OCI-LY7 (cell line): ENCODE measurements at regions of chr11 and their contacts with region 1.

Region 1: DNA sequence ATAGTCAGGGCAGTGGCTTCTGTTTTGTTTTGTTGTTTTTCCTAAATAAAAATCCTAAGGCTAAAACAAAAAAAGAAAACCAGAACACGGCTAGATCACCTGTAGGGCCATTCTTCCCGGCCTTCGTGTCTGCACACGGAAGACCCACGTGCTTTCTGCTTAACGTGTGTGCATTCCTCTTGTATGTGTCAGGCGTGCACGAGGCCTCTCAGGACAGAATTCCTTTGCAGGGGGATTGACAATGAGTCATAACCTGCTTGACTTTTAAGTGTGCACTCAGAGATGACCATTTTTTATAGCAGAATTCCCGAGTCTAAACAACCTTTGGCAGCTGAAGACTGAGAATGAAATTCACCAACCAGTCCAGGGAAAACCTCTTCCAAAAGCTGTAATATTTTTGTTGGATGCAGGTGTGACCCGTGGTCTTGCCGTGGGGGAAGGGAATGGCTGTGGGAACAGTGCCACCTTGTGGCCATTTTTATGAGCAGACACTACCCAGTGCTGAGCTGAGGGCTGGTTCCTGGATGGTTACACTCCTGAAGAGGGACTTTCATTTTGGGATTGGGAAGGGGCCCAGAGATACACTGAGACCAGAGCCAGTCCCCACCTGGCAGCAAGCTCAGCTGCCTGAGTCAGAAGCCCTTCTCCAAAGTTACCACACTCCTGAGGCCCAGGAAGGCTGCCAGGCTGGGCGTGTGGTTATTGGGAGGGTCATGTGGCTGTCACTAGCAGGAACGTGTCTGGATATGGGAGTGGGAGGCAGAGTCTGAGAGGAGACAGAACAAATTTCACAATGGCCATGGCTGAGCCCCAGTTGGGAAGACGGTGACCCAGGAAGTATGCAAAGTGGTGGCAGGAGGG is 35.8 kb upstream of the DKK3 start:
- DNase-seq: peak; percentile 64
- H3K4me3 ChIP-seq: no peak overlapping the region
- H3K27ac ChIP-seq: no peak overlapping the region
- H3K4me1 ChIP-seq: no peaks in the 10 kb centered on the region
- CTCF ChIP-seq: peak; percentile 93

Region 2: DNA sequence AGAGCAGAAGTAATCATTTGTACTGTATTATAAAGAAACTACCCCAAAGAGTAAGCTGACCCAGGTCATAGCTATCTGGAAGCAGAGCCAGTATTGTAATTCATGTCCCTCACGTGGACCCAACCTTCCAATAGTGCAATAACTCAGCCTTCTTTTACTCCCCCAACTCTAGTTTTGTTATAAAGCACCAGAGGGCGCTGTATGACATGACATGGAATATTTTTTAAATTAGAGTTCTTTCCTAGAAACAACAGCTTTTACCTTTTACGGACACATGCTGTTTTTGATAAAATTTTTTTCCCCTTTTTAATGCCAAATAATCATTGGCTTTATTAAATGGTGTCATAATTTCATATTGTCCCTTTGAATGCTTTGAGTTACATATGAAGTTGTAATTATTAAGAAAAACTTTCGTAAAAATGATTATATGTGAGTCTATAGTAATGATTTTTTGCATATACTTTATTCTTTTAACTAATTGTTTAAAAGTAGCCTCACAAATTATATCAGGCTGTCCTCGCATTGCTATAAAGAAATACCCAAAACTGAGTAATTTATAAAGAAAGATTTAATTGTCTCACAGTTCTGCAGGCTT is 112.6 kb before region 1 on chr11:
- CTCF ChIA-PET with region 1: no interaction called
- POLR2A ChIA-PET with region 1: no interaction called
- intact Hi-C with region 1: loop called (anchors 5 kb)
- DNase-seq: peak; percentile 38
- H3K4me3 ChIP-seq: no peak overlapping the region
- H3K27ac ChIP-seq: no peak overlapping the region
- H3K4me1 ChIP-seq: peaks cover 4% of the 10 kb centered on the region
- CTCF ChIP-seq: peak; percentile 82

Region 3: DNA sequence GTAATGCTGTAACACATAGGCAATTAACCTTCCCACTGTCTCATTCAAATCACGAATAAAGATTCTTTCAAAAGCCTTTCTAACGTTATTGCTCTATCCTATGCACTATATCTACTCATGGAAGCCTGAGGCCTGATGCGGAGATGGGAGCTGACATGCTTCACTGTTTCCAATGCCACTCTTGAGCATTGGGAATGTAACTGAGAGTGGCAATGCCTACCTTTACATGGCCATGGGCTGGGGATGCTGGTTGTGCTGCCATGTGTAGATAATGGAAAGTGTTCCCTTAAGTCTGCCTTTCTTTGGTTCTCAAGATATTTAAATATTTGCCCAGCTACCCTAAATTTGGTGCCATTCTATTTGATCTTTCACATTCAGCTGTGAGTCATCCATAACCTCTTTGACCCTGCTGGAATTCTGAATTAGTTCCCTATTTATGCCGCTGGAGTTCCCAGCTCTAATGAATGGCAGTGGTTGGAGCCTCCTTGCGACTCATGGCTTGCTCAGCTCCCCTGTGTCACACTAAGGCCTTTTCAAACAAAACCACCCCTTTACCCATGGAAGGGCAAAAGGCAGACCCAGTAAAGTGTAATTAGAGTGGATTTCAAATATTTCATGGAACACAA is 14.3 kb before region 1 on chr11:
- CTCF ChIA-PET with region 1: no interaction called
- POLR2A ChIA-PET with region 1: no interaction called
- intact Hi-C with region 1: no loop called
- DNase-seq: no peak
- H3K4me3 ChIP-seq: no peak overlapping the region
- H3K27ac ChIP-seq: no peak overlapping the region
- H3K4me1 ChIP-seq: no peaks in the 10 kb centered on the region
- CTCF ChIP-seq: no peak

Region 4: DNA sequence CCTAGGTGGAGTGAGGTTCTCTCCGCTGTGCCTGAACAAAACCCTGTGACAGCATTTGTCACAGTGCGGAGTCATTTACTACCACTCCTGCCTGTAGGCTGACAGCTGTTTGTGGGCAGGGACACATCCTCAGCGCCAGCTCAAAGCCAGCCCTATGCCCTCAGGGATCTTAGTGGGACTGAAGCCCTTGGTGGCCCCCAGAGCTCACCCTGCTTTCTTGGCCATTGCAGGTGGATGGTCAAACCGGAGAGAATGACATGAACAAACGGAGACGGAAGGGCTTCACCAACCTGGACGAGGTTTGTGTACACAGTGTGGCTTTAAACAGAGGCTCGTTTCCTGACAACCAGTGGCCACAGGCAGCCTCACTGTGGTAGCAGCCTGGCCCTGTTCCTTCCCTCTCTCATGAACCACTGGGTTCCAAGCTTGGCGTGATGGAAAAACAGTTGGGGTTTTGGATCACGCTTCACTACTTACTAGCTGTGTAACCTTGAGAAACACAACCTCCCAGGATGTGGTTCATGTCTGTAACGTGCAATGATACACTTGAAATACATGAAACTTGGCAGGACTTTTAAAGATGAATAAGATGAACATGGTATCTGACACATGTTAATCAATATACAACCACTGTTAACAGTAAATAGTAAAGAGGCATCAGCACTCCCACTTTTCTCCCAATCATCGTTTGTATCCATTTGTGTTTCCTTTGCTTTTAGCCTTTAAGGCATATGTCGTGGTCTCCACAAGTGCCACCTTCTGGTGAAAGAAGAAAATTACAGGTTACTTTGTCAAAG is 192.0 kb after region 1 on chr11:
- CTCF ChIA-PET with region 1: no interaction called
- POLR2A ChIA-PET with region 1: no interaction called
- intact Hi-C with region 1: loop called (anchors 1 kb)
- DNase-seq: peak; percentile 41
- H3K4me3 ChIP-seq: no peak overlapping the region
- H3K27ac ChIP-seq: no peak overlapping the region
- H3K4me1 ChIP-seq: no peaks in the 10 kb centered on the region
- CTCF ChIP-seq: peak; percentile 79

Region 5: GRCh38 chr11:12281571-12282478 is 237.6 kb after region 1 on chr11:
- CTCF ChIA-PET with region 1: interaction called, 3 read pairs
- POLR2A ChIA-PET with region 1: no interaction called
- intact Hi-C with region 1: loop called (anchors 1 kb)
- DNase-seq: peak; percentile 72
- H3K4me3 ChIP-seq: no peak overlapping the region
- H3K27ac ChIP-seq: no peak overlapping the region
- H3K4me1 ChIP-seq: no peaks in the 10 kb centered on the region
- CTCF ChIP-seq: peak; percentile 94